Mammary epithelial cell (primary cell): ENCODE measurements at regions of chr7 and their contacts with region 1.

Region 1: GRCh38 chr7:21767300-21767900 is 178.3 kb downstream of the CDCA7L start:
- DNase-seq: peak; percentile 71
- H3K4me3 ChIP-seq: no peak overlapping the region
- H3K27ac ChIP-seq: no peak overlapping the region
- H3K4me1 ChIP-seq: no peaks in the 10 kb centered on the region
- H3K27me3 ChIP-seq: no peaks in the 10 kb centered on the region
- CTCF ChIP-seq: peak; percentile 82 to 91

Region 2: GRCh38 chr7:20778063-20778721 is 989.2 kb before region 1 on chr7:
- CTCF ChIA-PET with region 1: no interaction called
- dilution Hi-C with region 1: no loop called
- in situ Hi-C with region 1: loop called (anchors 10 to 25 kb)
- intact Hi-C with region 1: loop called (anchors 1 kb)
- DNase-seq: peak; percentile 37
- H3K4me3 ChIP-seq: peak overlapping the region; percentile 52 to 77 (median 55)
- H3K27ac ChIP-seq: no peak overlapping the region
- H3K4me1 ChIP-seq: peaks cover 4% of the 10 kb centered on the region
- H3K27me3 ChIP-seq: peaks cover 17% of the 10 kb centered on the region
- CTCF ChIP-seq: peak; percentile 52 to 74

Region 3: DNA sequence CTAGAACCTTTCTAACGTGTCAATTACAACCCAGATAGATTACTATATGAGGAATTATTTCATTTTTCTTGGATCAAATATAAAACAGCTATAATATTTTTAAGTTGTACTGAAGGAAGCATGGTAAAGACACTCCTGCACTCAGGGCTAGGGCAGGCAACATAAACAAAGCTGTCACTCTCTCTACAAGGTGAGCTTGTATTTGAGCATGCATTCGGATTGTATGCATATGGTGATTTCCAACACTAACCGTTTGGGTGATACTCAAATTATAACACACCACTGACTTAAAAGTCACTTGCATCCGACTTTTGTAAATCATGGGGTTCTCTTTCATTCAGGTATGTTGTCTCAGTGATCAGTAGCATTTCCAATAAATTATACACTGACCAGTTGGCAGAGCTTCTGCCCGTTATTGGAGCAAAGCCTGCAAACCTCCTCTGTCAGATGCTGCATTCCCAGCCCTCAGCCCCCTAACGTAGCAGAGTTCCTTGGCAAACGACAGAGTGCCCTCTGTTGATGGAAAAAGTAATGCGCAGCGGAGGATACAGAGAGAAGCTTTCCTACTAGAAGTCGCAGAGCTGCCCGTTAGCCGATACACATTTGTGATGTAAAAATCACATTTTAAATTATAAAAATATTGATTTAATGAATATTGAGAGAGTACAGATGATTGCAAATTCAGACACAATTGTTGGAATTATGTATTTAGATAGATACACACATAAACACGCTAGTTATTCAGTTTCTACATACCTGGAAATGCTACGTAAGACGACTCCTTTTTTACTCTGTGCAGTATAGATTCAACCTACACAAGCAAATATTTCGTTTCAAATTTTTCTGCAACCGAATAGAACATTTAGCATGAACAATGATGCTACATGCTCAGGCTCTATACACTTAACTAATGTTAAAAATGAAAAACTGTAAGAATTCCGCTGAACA is 513.4 kb before region 1 on chr7:
- CTCF ChIA-PET with region 1: interaction called, 12 read pairs
- dilution Hi-C with region 1: no loop called
- in situ Hi-C with region 1: loop called in 1 of 2 experiments (anchors 10 kb)
- intact Hi-C with region 1: loop called (anchors 1 kb)
- DNase-seq: peak; percentile 52
- H3K4me3 ChIP-seq: no peak overlapping the region
- H3K27ac ChIP-seq: no peak overlapping the region
- H3K4me1 ChIP-seq: peaks cover 3% of the 10 kb centered on the region
- H3K27me3 ChIP-seq: no peaks in the 10 kb centered on the region
- CTCF ChIP-seq: peak; percentile 83 to 86

Region 4: GRCh38 chr7:21276471-21277035 is 490.8 kb before region 1 on chr7:
- CTCF ChIA-PET with region 1: no interaction called
- dilution Hi-C with region 1: no loop called
- in situ Hi-C with region 1: loop called in 1 of 2 experiments (anchors 10 kb)
- intact Hi-C with region 1: no loop called
- DNase-seq: no peak
- H3K4me3 ChIP-seq: no peak overlapping the region
- H3K27ac ChIP-seq: no peak overlapping the region
- H3K4me1 ChIP-seq: no peaks in the 10 kb centered on the region
- H3K27me3 ChIP-seq: no peaks in the 10 kb centered on the region
- CTCF ChIP-seq: no peak

Region 5: DNA sequence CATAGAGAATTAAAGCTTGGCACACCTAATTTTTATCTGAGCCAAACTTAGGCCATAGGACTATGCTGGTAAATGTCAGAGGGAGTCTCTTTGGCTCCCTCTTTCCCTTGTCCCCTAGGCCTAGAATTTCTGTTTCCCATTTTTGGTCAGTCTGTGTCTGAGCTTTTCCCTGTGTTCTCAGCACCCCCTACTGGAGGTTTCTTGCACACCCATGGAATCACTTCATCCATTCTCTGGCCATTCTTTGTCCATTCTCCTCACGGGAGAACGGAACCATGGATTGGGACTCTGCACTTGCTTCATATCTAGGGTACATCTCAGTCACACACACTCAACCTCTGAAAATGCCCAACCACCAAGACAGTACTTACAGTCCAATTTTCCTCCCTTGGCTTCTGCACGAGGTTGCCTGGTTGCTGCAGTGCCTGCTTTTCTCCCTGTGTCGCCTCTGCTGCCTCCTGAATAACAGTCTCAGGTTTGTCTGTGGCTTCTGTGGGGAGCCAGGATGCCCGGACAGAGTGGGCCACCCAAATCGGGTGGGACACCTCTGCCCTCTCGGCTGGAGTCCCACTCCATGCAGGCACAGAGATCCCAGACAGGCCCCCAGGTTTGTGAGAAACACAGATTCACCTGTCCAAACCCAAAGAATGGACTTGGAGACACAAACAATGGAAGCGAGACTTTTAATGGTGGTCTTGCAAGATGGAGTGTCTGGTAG is 259.6 kb before region 1 on chr7:
- CTCF ChIA-PET with region 1: no interaction called
- dilution Hi-C with region 1: no loop called
- in situ Hi-C with region 1: no loop called
- intact Hi-C with region 1: loop called (anchors 1 kb)
- DNase-seq: peak; percentile 28
- H3K4me3 ChIP-seq: no peak overlapping the region
- H3K27ac ChIP-seq: no peak overlapping the region
- H3K4me1 ChIP-seq: no peaks in the 10 kb centered on the region
- H3K27me3 ChIP-seq: no peaks in the 10 kb centered on the region
- CTCF ChIP-seq: peak; percentile 68 to 86

Region 6: DNA sequence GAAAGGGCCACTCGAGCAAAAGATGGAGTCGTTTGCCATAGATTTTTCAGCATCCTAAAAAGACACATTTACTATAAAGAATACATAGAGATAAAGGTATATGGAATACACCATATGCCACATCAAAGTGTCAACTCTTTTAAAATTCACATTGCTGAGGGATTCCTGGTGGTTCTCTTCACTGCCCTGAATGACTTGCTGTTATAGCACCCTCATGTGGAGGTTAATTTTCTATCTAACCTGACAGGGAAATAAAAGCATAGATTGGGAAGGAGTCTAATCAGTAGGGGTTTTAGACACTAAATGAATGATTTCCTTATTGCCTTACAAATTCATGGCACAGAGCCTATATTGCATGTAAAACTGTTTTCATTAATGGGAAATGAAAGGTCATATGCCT is 198.6 kb before region 1 on chr7:
- CTCF ChIA-PET with region 1: no interaction called
- dilution Hi-C with region 1: no loop called
- in situ Hi-C with region 1: no loop called
- intact Hi-C with region 1: loop called (anchors 1 kb)
- DNase-seq: no peak
- H3K4me3 ChIP-seq: no peak overlapping the region
- H3K27ac ChIP-seq: no peak overlapping the region
- H3K4me1 ChIP-seq: no peaks in the 10 kb centered on the region
- H3K27me3 ChIP-seq: peaks cover 10% of the 10 kb centered on the region
- CTCF ChIP-seq: peak; percentile 32 to 46

Region 7: GRCh38 chr7:21636694-21637093 is 130.7 kb before region 1 on chr7:
- CTCF ChIA-PET with region 1: no interaction called
- dilution Hi-C with region 1: no loop called
- in situ Hi-C with region 1: no loop called
- intact Hi-C with region 1: no loop called
- DNase-seq: no peak
- H3K4me3 ChIP-seq: no peak overlapping the region
- H3K27ac ChIP-seq: no peak overlapping the region
- H3K4me1 ChIP-seq: no peaks in the 10 kb centered on the region
- H3K27me3 ChIP-seq: no peaks in the 10 kb centered on the region
- CTCF ChIP-seq: no peak

Region 8: DNA sequence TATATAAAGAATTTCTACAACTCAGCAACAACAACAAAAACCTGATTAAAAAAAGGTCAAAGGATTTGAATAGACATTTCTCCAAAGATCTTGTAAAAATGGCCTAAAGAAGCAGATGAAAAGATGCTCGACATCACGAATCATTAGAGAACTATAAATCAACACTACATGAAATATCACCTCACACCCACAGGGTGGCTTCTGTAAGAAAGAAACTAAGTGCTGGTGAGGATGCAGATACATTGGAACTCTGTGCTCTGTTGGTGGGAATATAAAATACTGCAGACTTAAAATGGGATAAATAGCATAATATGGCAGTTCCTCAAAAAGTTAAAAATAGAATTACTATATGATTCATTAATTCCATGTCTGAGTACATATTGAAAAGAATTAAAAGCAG is 216.6 kb after region 1 on chr7:
- CTCF ChIA-PET with region 1: no interaction called
- dilution Hi-C with region 1: no loop called
- in situ Hi-C with region 1: no loop called
- intact Hi-C with region 1: no loop called
- DNase-seq: no peak
- H3K4me3 ChIP-seq: no peak overlapping the region
- H3K27ac ChIP-seq: no peak overlapping the region
- H3K4me1 ChIP-seq: no peaks in the 10 kb centered on the region
- H3K27me3 ChIP-seq: no peaks in the 10 kb centered on the region
- CTCF ChIP-seq: no peak

Region 9: DNA sequence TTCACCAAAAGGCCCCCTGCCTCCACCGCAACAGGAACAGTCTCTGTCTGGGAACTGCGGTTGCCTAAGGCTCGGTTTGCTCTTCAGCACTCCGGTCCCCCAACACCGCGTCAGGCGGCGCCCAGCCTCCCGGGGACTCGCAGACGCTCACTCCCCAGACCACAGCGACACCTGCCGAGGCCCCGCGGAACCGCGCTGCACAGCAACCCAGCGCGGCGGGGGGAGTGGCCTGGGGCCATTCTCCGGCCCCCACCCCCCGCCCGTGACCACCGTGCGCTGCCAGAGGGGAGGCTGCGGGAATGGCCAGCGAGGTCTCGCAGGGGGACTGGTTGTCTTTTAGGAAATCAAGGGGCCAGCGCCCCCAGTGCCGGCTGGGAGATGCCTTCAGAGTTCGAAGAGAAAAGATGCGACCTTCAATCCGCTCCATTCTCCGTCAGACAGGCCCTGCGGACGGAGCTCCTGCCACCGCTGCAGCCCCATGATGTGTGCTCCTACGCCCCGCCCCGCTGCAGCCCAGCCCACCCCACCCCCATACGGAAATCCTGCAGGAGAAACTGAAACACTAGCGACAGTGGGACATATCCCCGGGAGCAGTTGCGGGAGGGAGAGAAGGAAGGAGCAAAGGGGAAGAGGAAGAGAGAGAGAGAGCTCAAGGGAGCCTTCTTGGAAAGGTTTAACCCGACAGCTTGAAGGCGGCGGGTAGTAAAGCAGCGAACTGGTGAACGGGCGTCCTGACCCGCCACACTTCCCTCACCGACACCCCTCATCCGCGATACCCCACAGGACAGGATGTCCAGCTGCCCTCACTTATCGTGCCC is 315.7 kb after region 1 on chr7:
- CTCF ChIA-PET with region 1: interaction called, 9 read pairs
- dilution Hi-C with region 1: no loop called
- in situ Hi-C with region 1: no loop called
- intact Hi-C with region 1: loop called (anchors 5 kb)
- DNase-seq: peak; percentile 70
- H3K4me3 ChIP-seq: peak overlapping the region; percentile 51 to 73 (median 70)
- H3K27ac ChIP-seq: no peak overlapping the region
- H3K4me1 ChIP-seq: peaks cover 6% of the 10 kb centered on the region
- H3K27me3 ChIP-seq: no peaks in the 10 kb centered on the region
- CTCF ChIP-seq: peak; percentile 67 to 97